Activated T-helper 2 cell treated with anti-CD3 and anti-CD28 coated beads, Interferon-gamma antibody, Interleukin-2, Interleukin-4, amounts not matched to agents 10 μg/mL and 5 μg/mL and 100 μg/mL, durations not matched to agents 14 hours and 24 hours and 36 hours (primary cell): ENCODE measurements at regions of chr1 and their contacts with region 1.

Region 1: DNA sequence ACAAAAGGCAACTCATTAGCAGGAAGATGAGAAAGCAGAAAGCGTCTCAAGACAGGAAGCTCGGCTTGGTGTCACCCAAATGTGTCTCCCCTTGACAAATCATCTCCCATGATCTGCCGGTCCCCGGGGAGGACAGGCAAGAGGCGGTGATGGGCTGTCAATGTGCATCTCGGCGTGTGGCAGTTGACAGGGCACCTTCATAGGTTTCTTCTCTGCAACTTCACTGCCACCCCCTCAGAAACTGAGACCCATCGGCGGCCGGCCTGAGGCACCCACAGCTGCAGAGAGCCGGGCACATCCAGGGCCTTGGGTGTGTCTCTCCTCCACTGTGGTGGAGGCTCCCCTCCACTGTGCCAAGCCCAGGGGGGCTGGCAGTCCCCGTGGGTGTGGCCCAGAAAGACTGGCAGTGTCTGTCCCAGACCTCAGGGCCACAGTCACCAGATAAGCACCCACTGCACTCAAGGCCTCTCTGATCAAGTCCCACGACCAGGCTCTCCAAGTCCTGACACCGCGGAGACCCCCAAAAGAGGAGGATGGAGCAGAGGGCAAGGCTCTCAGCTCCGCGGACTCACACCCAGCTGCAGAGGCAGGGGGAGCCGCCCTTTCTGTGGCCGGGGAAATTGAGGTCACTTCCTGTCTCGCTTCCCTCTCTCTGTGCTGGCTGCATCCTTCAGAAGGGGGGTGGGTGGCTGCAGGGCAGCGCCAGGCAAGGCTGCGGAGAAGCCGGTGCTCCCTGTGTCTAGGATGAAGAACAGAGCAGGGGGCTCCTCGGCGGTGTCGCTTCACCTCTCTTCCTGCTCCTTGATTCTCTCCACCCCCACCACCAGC is 39.6 kb upstream of the LBR start:
- DNase-seq: peak; percentile 83
- H3K4me3 Mint-ChIP-seq: peak overlapping the region; percentile 89
- H3K27ac Mint-ChIP-seq: peak overlapping the region; percentile 99
- H3K4me1 Mint-ChIP-seq: peaks cover 41% of the 10 kb centered on the region
- H3K27me3 Mint-ChIP-seq: no peaks in the 10 kb centered on the region

Region 2: GRCh38 chr1:225406976-225407725 is 60.3 kb before region 1 on chr1:
- intact Hi-C with region 1: no loop called
- DNase-seq: no peak
- H3K4me3 Mint-ChIP-seq: no peak overlapping the region
- H3K27ac Mint-ChIP-seq: no peak overlapping the region
- H3K4me1 Mint-ChIP-seq: peaks cover 6% of the 10 kb centered on the region
- H3K27me3 Mint-ChIP-seq: no peaks in the 10 kb centered on the region

Region 3: DNA sequence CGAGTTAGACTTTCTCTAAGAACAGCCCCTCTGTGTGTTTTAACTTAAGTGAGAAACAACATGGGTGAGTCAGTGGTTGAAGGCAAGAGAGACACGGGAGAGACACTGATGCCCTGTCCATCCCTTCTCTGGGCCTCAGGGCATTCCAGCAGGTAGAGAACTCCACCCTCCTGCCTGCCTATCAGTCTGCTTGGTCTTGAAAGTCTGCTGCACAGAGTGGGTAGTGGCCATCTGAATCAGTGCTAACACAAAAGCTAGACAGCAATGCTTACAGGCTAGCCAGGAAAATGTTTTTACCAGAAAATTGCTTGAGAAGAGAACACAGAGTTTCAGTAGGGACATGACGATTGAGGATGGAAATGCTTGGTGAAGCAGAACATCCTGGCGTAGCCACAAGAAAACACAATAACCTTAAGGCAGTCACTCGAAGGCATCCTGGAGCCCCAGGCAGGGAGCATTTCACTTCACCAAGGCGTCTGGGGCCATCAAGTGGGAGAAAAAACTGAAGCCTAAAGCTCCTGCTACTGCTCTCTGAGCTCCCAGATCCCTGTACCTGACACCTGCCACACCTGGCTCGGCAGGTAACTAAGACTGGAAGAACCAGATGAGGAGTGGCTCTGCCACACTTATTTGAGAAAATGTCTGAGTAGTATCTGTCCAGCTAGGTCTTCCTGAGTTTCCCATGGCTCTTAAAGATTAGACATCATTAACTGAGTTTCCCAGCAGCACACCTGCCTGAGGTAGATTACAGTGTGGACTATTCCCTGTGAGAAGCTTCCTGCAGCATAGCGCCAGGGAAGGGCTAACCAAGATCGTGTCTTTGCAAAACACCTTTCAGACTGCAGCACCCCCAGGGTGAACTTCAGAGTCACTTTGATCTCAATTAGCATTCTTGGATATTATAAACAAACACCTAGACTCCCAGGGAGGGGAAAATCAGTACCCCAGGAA is 21.5 kb before region 1 on chr1:
- intact Hi-C with region 1: loop called (anchors 1 kb)
- DNase-seq: no peak
- H3K4me3 Mint-ChIP-seq: peak overlapping the region; percentile 57
- H3K27ac Mint-ChIP-seq: peak overlapping the region; percentile 92
- H3K4me1 Mint-ChIP-seq: peaks cover 59% of the 10 kb centered on the region
- H3K27me3 Mint-ChIP-seq: no peaks in the 10 kb centered on the region

Region 4: DNA sequence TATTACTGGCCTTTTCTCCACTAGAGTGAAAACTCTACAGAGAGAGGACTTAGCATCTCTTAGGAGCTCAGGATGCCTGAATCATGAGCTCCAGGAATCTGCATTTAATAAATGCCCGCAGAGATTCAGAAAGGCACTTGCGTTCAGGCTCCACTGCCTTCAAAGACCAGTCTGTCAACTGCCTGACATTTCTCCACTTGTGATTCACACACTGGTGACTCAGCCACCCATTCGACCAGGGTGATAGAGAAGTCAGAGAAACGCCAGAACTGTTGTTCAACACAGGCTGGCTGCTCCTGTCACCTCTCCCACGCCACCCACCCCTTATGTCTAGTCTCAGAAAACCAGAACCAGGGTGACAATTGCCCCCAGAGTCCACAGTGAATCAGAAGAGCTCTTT is 12.7 kb before region 1 on chr1:
- intact Hi-C with region 1: loop called (anchors 1 kb)
- DNase-seq: no peak
- H3K4me3 Mint-ChIP-seq: peak overlapping the region; percentile 7
- H3K27ac Mint-ChIP-seq: peak overlapping the region; percentile 73
- H3K4me1 Mint-ChIP-seq: peaks cover 45% of the 10 kb centered on the region
- H3K27me3 Mint-ChIP-seq: no peaks in the 10 kb centered on the region

Region 5: GRCh38 chr1:225923692-225924555 is 456.5 kb after region 1 on chr1 and contains the start of gene PYCR2:
- intact Hi-C with region 1: loop called (anchors 5 kb)
- DNase-seq: peak; percentile 94
- H3K4me3 Mint-ChIP-seq: peak within 1 kb of the TSS; percentile 92
- H3K27ac Mint-ChIP-seq: peak within 1 kb of the TSS; percentile 91
- H3K4me1 Mint-ChIP-seq: peaks cover 43% of the 10 kb centered on the region
- H3K27me3 Mint-ChIP-seq: no peaks in the 10 kb centered on the region
- total RNA-seq, gene PYCR2: 117 and 121 TPM in 2 replicates

Region 6: DNA sequence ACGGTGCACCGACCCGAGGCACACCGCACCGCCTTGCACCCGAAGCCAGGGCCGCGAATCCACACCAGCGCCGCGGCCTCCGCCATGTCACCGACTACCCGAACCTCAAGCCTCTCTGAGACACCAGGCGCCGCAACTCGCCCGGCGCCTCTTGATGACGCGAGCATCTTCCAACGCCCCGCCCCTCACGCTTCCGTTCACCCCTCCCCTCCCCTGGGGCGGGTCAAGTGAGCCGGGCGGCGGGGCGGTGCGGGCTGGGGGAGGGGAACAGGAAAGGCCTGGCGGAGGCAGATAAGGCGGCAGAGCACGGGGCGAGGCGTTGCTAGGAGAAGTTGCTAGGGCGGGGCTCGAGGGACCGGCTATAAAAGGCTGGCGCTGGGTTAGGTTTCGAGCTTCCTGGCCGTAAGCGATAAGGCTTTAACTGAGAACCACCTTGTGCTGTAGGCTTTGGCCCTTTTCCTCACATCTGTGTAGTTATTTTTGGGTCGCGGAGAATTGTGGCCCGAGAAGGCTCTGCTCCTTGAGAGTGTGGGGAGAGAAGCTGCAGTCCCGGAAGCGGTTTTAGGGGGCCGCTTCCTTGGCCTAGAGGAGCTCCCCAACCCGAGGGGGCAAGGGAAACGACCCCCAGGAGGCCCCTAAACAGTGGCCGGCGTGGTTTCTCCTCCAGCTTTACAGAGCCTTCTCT is 532.0 kb after region 1 on chr1 and contains the start of gene SDE2:
- intact Hi-C with region 1: loop called (anchors 2 kb)
- DNase-seq: peak; percentile 100
- H3K4me3 Mint-ChIP-seq: peak within 1 kb of the TSS; percentile 100
- H3K27ac Mint-ChIP-seq: peak within 1 kb of the TSS; percentile 99
- H3K4me1 Mint-ChIP-seq: peaks cover 55% of the 10 kb centered on the region
- H3K27me3 Mint-ChIP-seq: no peaks in the 10 kb centered on the region
- total RNA-seq, gene SDE2: 22.0 and 22.3 TPM in 2 replicates